ENCODE measurements at regions of chr11 and their contacts with region 1.

Region 1: GRCh38 chr11:9170450-9170849 is 79.1 kb upstream of the SCUBE2 start:
- DNase-seq: peak in 1 of 3 donors; percentile 19
- H3K4me3 ChIP-seq: no peak overlapping the region
- H3K4me3 Mint-ChIP-seq: no peak overlapping the region
- H3K27ac ChIP-seq: peak overlapping the region in 1 of 2 donors; percentile 50
- H3K27ac Mint-ChIP-seq: peak overlapping the region in 1 of 7 donors; percentile 65
- H3K4me1 ChIP-seq: no peaks in the 10 kb centered on the region
- H3K4me1 Mint-ChIP-seq: peaks cover 3% of the 10 kb centered on the region
- H3K27me3 ChIP-seq: no peaks in the 10 kb centered on the region
- H3K27me3 Mint-ChIP-seq: no peaks in the 10 kb centered on the region
- CTCF ChIP-seq: no peak

Region 2: DNA sequence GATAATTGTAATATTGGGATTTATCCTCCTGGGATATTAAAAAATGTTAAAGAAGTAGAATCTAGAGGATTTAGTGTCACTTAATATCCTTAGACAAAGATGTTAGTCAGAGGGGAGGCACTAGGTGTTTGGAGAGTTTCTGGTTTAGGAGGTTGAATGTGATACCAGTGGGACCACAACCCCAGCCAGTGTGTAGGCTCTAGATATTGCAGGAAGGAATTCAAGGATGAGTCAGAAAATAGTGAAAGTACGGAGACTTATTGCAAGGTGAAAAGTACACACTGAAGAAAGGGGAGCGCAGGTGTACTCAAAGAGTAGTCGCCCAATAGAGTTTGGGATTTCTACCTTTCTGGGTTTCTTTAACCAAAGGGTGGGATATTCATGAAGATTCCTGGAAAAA is 149.6 kb after region 1 on chr11:
- intact Hi-C with region 1: loop called in 1 of 2 experiments (anchors 10 kb)
- DNase-seq: no peak
- H3K4me3 ChIP-seq: no peak overlapping the region
- H3K4me3 Mint-ChIP-seq: no peak overlapping the region
- H3K27ac ChIP-seq: no peak overlapping the region
- H3K27ac Mint-ChIP-seq: no peak overlapping the region
- H3K4me1 ChIP-seq: peaks cover 10 to 15% of the 10 kb centered on the region in 2 donors
- H3K4me1 Mint-ChIP-seq: peaks cover 31% of the 10 kb centered on the region
- H3K27me3 ChIP-seq: no peaks in the 10 kb centered on the region
- H3K27me3 Mint-ChIP-seq: peaks cover 1 to 5% (median 4%) of the 10 kb centered on the region in 3 donors
- CTCF ChIP-seq: no peak

Region 3: DNA sequence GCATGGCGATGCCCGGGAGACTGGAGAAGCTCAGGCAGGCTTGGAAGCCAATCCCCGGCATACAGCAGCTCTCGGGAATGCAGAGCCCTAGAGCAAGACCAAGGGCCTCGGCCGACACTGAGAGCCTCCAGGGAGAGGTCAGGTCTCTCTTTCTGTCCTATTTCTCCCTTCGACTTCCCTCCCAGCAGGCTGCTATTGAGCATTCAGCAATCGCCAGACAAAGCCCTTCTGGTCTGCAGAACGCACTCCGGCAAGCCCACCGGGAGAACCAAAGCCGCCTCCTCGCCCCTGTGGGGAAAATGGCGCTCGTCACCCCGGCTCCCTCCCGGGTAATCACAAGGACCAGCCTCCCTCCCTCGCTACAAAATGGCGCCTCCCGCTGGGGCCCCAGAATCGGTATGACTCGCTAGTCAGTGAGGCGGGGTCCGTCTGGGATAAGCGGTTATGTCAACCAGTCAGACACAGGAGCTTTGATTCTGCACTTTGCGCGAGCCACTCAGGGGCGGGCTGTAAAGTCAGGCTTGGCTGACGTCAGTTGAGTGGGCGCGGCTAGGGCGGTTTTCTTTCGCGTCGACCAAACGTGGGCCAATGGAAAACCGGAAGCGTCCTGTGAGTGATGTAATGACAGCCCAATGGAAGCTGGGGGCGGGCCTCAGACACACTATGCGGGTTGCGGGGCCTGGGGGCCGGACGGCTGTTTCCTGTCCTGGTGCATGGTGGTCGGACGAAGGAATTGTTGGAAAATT is 290.0 kb after region 1 on chr11 and contains the start of gene ZNF143:
- intact Hi-C with region 1: loop called in 1 of 2 experiments (anchors 5 kb)
- DNase-seq: peak; percentile 100
- H3K4me3 ChIP-seq: peak within 1 kb of the TSS; percentile 83 to 97 (median 89)
- H3K4me3 Mint-ChIP-seq: peak within 1 kb of the TSS; percentile 91 to 94
- H3K27ac ChIP-seq: peak within 1 kb of the TSS; percentile 94 to 99
- H3K27ac Mint-ChIP-seq: peak within 1 kb of the TSS; percentile 97 to 99 (median 99)
- H3K4me1 ChIP-seq: peaks cover 15 to 25% of the 10 kb centered on the region in 2 donors
- H3K4me1 Mint-ChIP-seq: peaks cover 28% of the 10 kb centered on the region
- H3K27me3 ChIP-seq: no peaks in the 10 kb centered on the region
- H3K27me3 Mint-ChIP-seq: no peaks in the 10 kb centered on the region
- CTCF ChIP-seq: no peak
- polyA plus RNA-seq, gene ZNF143: 26.8 to 30.5 (median 30.1) TPM

Measured in CD14-positive monocyte (primary cell).